ENCODE measurements at regions of chr17 and their contacts with region 1.

Region 1: DNA sequence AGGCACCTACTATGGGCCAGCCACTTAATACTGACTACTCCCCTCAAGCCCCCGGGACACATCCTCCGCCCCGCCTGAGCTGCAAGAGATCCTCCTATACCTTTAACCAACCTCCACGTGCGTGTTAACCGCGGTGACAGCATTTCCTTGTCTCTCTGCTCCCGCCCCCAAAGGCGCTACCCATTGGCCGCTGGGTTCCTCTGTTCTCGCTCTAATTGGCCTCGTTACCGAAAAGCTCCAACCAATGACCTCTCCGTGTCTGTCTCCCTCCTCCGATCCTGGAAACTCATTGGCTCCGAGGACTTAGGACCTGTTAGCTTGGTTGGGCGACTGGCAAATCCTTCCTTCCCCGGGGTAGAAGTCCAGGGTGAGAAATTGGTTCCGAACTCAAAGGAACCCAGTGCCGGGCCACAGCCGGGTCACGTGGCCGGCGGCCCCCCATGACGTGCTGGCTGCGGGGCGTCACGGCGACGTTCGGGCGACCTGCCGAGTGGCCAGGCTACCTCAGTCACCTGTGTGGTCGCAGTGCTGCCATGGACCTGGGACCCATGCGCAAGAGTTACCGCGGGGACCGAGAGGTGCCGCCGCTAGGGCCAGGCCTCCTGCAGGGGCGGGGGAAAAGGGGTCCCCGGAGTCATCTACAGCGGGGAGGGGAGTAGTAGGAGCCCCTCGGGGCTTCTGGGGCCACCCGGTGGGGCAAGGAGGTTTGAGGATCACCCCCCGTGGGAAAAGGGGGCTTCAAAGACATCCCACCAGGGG is at the start of gene PNPO:
- DNase-seq: peak; percentile 95 to 97
- ATAC-seq: peak; percentile 100
- H3K4me3 ChIP-seq: peak within 1 kb of the TSS; percentile 77 to 99 (median 88)
- H3K27ac ChIP-seq: peak within 1 kb of the TSS; percentile 88 to 98 (median 92)
- H3K4me1 ChIP-seq: peaks cover 13 to 20% of the 10 kb centered on the region in 2 donors
- H3K27me3 ChIP-seq: no peaks in the 10 kb centered on the region
- CTCF ChIP-seq: peak in 2 of 5 experiments; percentile 23 to 24
- POLR2A ChIP-seq: peak; percentile 55 to 71
- total RNA-seq, gene PNPO: 27.9 to 64.0 (median 41.5) TPM

Region 2: GRCh38 chr17:47907932-47908562 is 33.4 kb before region 1 on chr17:
- in situ Hi-C with region 1: no loop called
- intact Hi-C with region 1: loop called (anchors 2 kb)
- DNase-seq: peak; percentile 50 to 83
- ATAC-seq: peak; percentile 90 to 92
- H3K4me3 ChIP-seq: peak overlapping the region; percentile 18 to 37 (median 30)
- H3K27ac ChIP-seq: peak overlapping the region; percentile 86 to 97 (median 90)
- H3K4me1 ChIP-seq: peaks cover 63 to 82% of the 10 kb centered on the region in 2 donors
- H3K27me3 ChIP-seq: no peaks in the 10 kb centered on the region
- CTCF ChIP-seq: no peak
- POLR2A ChIP-seq: no peak

Region 3: GRCh38 chr17:47929218-47930000 is 12.0 kb before region 1 on chr17:
- in situ Hi-C with region 1: no loop called
- intact Hi-C with region 1: no loop called
- DNase-seq: no peak
- ATAC-seq: peak; percentile 29 to 75
- H3K4me3 ChIP-seq: no peak overlapping the region
- H3K27ac ChIP-seq: peak overlapping the region; percentile 4 to 60 (median 48)
- H3K4me1 ChIP-seq: no peaks in the 10 kb centered on the region
- H3K27me3 ChIP-seq: no peaks in the 10 kb centered on the region
- CTCF ChIP-seq: no peak
- POLR2A ChIP-seq: no peak